GM13977 (cell line): ENCODE measurements at regions of chr9 and their contacts with region 1.

Region 1: GRCh38 chr9:90870621-90871326 is 69.2 kb downstream of the SYK start:
- DNase-seq: peak; percentile 62
- CTCF ChIP-seq: peak; percentile 86

Region 2: DNA sequence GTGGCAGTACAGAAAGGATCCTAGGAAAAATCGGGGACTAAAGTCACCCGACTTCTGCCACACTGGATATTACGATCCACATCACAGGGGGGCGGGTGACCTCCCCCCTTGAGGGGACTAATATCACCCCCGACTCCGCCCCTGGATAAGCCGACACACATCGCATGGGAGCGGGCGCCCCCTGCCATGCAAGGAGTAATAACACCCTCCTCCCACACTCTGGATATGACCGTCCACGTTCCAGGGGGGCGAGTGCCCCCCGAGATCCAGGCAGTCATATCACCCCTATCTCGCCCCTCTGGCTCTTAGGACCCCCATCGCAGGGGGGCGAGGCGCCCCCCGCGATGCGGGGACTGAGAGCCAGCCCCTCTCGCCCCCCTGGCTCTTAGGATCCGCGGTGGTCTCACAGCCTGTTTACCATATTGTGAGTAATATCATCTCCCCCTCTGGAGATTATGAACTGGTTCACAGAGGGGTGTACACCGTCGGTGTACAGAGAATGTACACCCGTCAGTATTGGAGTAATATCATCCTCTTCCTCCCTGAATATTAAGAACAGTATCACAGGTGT is 651.1 kb before region 1 on chr9:
- in situ Hi-C with region 1: loop called (anchors 25 kb)
- DNase-seq: peak; percentile 48
- CTCF ChIP-seq: peak; percentile 56

Region 3: GRCh38 chr9:90783552-90783951 is 87.2 kb before region 1 on chr9:
- in situ Hi-C with region 1: no loop called
- DNase-seq: no peak
- CTCF ChIP-seq: no peak